Activated CD4-positive, alpha-beta T cell treated with anti-CD3 and anti-CD28 coated beads, Interleukin-2, amount 10 ng/mL, durations not matched to agents 24 days and 14 days (primary cell): ENCODE measurements at regions of chr9 and their contacts with region 1.

Region 1: GRCh38 chr9:137156567-137157375 is 13.1 kb downstream of the LRRC26 start:
- DNase-seq: peak; percentile 86
- H3K4me3 Mint-ChIP-seq: peak overlapping the region; percentile 73
- H3K27ac Mint-ChIP-seq: peak overlapping the region; percentile 20
- H3K4me1 Mint-ChIP-seq: peaks cover 9% of the 10 kb centered on the region
- H3K27me3 Mint-ChIP-seq: peaks cover 24% of the 10 kb centered on the region

Region 2: GRCh38 chr9:137168905-137169856 is 12.4 kb after region 1 on chr9:
- intact Hi-C with region 1: loop called (anchors 1 kb)
- DNase-seq: peak; percentile 75
- H3K4me3 Mint-ChIP-seq: peak overlapping the region; percentile 66
- H3K27ac Mint-ChIP-seq: no peak overlapping the region
- H3K4me1 Mint-ChIP-seq: no peaks in the 10 kb centered on the region
- H3K27me3 Mint-ChIP-seq: peaks cover 31% of the 10 kb centered on the region

Region 3: GRCh38 chr9:137459147-137459600 is 302.4 kb after region 1 on chr9 and contains the start of gene NSMF:
- intact Hi-C with region 1: no loop called
- DNase-seq: peak; percentile 99
- H3K4me3 Mint-ChIP-seq: peak within 1 kb of the TSS; percentile 57
- H3K27ac Mint-ChIP-seq: no peak within 1 kb of the TSS
- H3K4me1 Mint-ChIP-seq: peaks cover 16% of the 10 kb centered on the region
- H3K27me3 Mint-ChIP-seq: no peaks in the 10 kb centered on the region
- total RNA-seq, gene NSMF: 68.6 and 69.6 TPM in 2 replicates